PC-9 (cell line): ENCODE measurements at regions of chr17 and their contacts with region 1.

Region 1: DNA sequence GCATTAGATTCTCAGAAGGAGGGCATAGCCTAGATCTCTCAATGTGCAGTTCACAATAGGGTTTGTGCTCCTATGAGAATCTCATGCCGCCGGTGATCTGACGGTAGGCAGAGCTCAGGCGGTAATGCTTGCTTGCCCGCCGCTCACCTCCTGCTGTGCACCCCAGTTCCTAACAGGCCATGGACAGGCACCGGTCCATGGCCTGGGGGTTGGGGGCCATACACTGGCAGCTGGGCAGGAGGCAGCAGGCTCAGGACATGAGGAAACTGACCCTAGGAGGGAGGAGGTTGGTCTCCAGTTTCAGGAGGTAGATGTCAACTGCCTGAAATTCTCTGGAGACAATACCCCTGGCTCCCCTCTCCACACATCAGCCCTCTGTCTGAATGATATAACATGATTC is 245.0 kb upstream of the CACNG5 start:
- DNase-seq: no peak
- H3K4me3 ChIP-seq: no peak overlapping the region
- H3K27ac ChIP-seq: no peak overlapping the region
- H3K4me1 ChIP-seq: no peaks in the 10 kb centered on the region
- H3K27me3 ChIP-seq: no peaks in the 10 kb centered on the region
- CTCF ChIP-seq: no peak

Region 2: GRCh38 chr17:66345264-66345663 is 244.6 kb before region 1 on chr17:
- CTCF ChIA-PET with region 1: no interaction called
- POLR2A ChIA-PET with region 1: interaction called, 12 read pairs
- intact Hi-C with region 1: no loop called
- DNase-seq: no peak
- H3K4me3 ChIP-seq: no peak overlapping the region
- H3K27ac ChIP-seq: no peak overlapping the region
- H3K4me1 ChIP-seq: peaks cover 45% of the 10 kb centered on the region
- H3K27me3 ChIP-seq: no peaks in the 10 kb centered on the region
- CTCF ChIP-seq: no peak

Region 3: DNA sequence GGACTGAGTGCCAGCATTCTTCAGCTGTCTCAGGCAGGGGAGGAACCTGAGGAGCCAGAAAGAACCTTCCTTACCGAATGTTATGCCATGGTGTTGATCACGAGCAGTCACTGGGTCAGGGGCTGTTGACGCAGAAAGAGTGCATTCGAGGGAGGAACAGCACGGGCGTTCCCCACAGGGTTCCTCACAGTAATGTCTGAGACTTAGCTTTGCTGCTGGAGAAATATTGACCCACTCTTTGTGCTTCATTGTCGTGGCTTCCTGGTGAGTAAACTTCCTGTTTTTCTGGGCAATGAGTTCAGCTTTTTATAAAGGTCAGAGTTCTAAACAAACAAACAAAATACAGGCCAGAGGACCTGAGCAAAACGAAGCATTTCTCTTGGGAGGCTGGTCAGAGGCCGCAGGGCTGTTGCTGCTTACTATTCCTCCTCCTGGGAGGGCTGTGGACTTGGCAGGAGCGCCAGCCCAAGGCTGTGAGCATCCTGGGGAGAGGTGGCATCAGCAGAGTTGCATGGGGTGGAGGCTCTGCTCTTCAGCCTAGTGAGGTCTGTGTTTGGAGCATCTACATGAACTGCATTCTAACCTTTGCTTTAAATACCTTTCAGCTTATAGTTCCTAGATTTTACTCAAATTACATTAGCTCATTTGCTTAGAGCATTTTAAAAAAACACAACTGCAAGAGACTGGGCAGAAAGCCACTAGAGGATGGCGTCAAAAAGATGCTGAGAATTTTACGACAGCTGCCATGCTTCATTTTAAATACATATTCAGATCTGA is 101.9 kb after region 1 on chr17:
- CTCF ChIA-PET with region 1: no interaction called
- POLR2A ChIA-PET with region 1: no interaction called
- intact Hi-C with region 1: no loop called
- DNase-seq: peak; percentile 9 to 93
- H3K4me3 ChIP-seq: peak overlapping the region; percentile 6; the same call in 1 of the 2 replicates
- H3K27ac ChIP-seq: peak overlapping the region; percentile 84
- H3K4me1 ChIP-seq: peaks cover 27% of the 10 kb centered on the region
- H3K27me3 ChIP-seq: no peaks in the 10 kb centered on the region
- CTCF ChIP-seq: no peak